AG04449 (cell line): ENCODE measurements at regions of chr11 and their contacts with region 1.

Region 1: GRCh38 chr11:2196970-2197770 is 25.6 kb upstream of the TH start:
- DNase-seq: no peak
- H3K4me3 ChIP-seq: no peak overlapping the region
- CTCF ChIP-seq: peak; percentile 98

Region 2: DNA sequence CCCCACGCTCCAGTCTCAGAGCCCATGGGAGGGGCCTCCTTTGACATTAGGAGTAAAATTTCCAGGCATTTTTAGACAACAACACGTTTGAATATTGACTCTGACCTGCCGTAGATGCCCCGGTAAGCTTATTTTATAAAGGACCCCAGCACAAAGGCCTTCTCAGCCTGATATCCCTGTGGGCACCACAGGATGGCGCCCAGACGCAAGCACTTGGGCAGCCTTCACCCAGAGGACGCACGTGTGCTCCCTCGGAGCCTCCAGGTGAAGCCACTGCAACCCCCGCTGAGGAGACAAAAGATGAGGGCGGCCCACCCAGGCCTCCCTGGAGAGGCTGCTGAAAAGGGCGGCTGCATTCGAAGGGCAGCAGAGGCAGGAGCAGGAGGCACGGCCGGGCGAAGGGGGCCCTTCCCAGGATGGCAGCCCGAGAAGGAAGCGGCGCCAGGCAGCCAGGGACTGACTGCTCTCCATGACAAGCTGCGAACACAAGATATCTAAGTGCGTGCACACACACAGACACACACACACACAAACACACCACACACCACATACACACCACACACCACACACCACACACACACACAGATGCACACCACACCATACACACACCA is 10.4 kb before region 1 on chr11:
- CTCF ChIA-PET with region 1: interaction called, 27 read pairs
- POLR2A ChIA-PET with region 1: no interaction called
- DNase-seq: no peak
- H3K4me3 ChIP-seq: no peak overlapping the region
- CTCF ChIP-seq: peak; percentile 52

Region 3: GRCh38 chr11:2305140-2305840 is 108.1 kb after region 1 on chr11:
- CTCF ChIA-PET with region 1: interaction called, 26 read pairs
- POLR2A ChIA-PET with region 1: no interaction called
- DNase-seq: no peak
- H3K4me3 ChIP-seq: no peak overlapping the region
- CTCF ChIP-seq: peak; percentile 79

Region 4: DNA sequence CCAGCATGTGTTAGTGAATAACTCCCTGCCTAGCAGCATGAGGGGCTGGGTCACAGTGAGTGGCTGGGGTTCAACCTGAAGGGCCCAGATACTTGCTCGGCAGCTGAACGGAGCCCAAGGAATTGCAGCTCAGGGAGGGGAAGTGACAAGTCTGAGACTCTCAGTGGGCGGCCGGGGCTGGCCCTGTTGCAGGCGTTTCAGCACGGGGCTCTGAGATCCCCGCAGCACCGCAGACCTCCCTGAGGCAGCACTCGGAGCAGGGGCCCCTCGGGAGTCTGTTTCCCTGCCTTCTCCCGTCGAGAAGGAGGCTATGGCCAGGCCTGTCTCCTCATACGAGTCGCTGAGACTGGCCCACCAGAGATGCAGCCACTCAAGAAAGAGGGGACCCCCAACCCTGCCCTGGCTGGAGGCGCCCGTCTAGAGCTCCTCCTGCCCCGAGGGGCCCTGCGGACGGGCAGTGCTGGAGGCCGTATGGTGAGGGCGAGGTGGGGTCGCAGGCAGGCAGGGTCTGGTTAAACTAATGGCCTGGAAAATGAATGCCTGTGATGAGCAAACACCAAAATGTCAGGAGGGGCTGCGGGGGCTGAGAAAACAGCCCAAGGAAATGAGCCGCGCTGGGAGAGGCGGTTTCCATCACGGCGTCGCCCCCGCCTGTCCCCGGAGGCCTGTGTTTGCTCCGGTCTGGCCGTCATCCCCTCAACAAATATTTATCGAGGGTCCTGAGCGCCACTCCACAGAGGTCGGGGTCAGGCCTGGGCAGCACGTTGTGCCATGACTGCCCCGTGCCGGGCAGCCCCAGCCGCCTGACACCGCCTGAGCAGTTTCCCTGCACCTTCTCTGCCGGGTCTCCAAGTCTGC is 212.7 kb after region 1 on chr11:
- CTCF ChIA-PET with region 1: interaction called, 13 read pairs
- POLR2A ChIA-PET with region 1: no interaction called
- DNase-seq: no peak
- H3K4me3 ChIP-seq: no peak overlapping the region
- CTCF ChIP-seq: no peak